Aorta (tissue), 5 donors: ENCODE measurements at regions of chr9 and their contacts with region 1.

Region 1: GRCh38 chr9:35237311-35237710 is 75.5 kb downstream of the UNC13B start:
- DNase-seq: no peak
- ATAC-seq: no peak
- H3K4me3 ChIP-seq: no peak overlapping the region
- H3K27ac ChIP-seq: no peak overlapping the region
- H3K4me1 ChIP-seq: no peaks in the 10 kb centered on the region
- H3K27me3 ChIP-seq: no peaks in the 10 kb centered on the region

Region 2: GRCh38 chr9:35179347-35180287 is 57.7 kb before region 1 on chr9:
- intact Hi-C with region 1: loop called in 1 of 2 experiments (anchors 10 kb)
- DNase-seq: no peak
- ATAC-seq: no peak
- H3K4me3 ChIP-seq: no peak overlapping the region
- H3K27ac ChIP-seq: no peak overlapping the region
- H3K4me1 ChIP-seq: no peaks in the 10 kb centered on the region
- H3K27me3 ChIP-seq: no peaks in the 10 kb centered on the region